OCI-LY7 (cell line): ENCODE measurements at regions of chr10 and their contacts with region 1.

Region 1: GRCh38 chr10:102461187-102462054 is 10.1 kb upstream of the C10orf95 start:
- DNase-seq: peak; percentile 96
- H3K4me3 ChIP-seq: peak overlapping the region; percentile 78
- H3K27ac ChIP-seq: peak overlapping the region; percentile 73
- H3K4me1 ChIP-seq: peaks cover 29% of the 10 kb centered on the region
- CTCF ChIP-seq: no peak

Region 2: DNA sequence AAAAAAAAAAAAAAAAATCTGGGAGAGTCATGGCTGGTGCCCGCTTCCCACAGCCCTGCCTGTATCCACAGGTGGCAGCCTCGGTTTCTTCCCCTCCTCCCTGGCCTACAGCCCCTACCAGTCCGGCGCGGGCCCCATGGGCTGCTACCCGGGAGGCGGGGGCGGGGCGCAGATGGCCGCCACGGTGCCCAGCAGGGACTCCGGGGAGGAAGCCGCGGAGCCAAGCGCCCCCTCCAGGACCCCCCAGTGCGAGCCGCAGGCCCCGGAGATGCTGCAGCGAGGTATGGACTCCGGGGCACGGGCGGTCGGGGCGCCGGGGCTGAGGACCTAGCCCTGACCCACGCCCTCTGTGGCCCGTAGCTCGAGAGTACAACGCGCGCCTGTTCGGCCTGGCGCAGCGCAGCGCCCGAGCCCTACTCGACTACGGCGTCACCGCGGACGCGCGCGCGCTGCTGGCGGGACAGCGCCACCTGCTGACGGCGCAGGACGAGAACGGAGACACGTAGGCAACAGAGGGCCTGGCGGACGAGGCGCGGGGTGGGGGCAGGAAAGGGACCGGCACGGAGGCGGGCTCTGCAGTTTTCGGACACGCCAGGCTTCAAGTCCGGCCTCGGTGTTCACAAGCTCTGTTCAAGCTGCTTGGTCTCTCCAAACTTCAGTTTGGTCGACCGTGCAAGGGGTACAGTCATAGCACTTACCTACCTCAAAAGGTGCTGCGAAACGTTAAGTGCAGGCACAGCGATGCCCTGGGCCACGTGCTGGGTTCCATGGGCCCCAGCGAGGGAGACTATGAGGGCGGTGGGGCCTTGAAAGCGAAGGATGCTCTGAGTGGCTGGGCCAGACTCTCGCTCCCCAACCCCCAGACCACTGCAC is 62.0 kb before region 1 on chr10:
- CTCF ChIA-PET with region 1: no interaction called
- POLR2A ChIA-PET with region 1: interaction called, 3 read pairs
- intact Hi-C with region 1: loop called (anchors 5 kb)
- DNase-seq: peak; percentile 90
- H3K4me3 ChIP-seq: peak overlapping the region; percentile 59
- H3K27ac ChIP-seq: peak overlapping the region; percentile 25
- H3K4me1 ChIP-seq: peaks cover 21% of the 10 kb centered on the region
- CTCF ChIP-seq: peak; percentile 90

Region 3: GRCh38 chr10:102413053-102413705 is 48.2 kb before region 1 on chr10:
- CTCF ChIA-PET with region 1: no interaction called
- POLR2A ChIA-PET with region 1: no interaction called
- intact Hi-C with region 1: no loop called
- DNase-seq: peak; percentile 84
- H3K4me3 ChIP-seq: no peak overlapping the region
- H3K27ac ChIP-seq: no peak overlapping the region
- H3K4me1 ChIP-seq: peaks cover 27% of the 10 kb centered on the region
- CTCF ChIP-seq: no peak

Region 4: GRCh38 chr10:102432162-102432950 is 29.1 kb before region 1 on chr10 and contains the start of gene CUEDC2:
- CTCF ChIA-PET with region 1: no interaction called
- POLR2A ChIA-PET with region 1: interaction called, 6 read pairs
- intact Hi-C with region 1: loop called (anchors 1 kb)
- DNase-seq: peak; percentile 98
- H3K4me3 ChIP-seq: peak within 1 kb of the TSS; percentile 88
- H3K27ac ChIP-seq: peak within 1 kb of the TSS; percentile 41
- H3K4me1 ChIP-seq: peaks cover 19% of the 10 kb centered on the region
- CTCF ChIP-seq: peak; percentile 37; the same call in 1 of the 2 replicates
- total RNA-seq, gene CUEDC2: 48.9 and 61.0 TPM in 2 replicates

Region 5: DNA sequence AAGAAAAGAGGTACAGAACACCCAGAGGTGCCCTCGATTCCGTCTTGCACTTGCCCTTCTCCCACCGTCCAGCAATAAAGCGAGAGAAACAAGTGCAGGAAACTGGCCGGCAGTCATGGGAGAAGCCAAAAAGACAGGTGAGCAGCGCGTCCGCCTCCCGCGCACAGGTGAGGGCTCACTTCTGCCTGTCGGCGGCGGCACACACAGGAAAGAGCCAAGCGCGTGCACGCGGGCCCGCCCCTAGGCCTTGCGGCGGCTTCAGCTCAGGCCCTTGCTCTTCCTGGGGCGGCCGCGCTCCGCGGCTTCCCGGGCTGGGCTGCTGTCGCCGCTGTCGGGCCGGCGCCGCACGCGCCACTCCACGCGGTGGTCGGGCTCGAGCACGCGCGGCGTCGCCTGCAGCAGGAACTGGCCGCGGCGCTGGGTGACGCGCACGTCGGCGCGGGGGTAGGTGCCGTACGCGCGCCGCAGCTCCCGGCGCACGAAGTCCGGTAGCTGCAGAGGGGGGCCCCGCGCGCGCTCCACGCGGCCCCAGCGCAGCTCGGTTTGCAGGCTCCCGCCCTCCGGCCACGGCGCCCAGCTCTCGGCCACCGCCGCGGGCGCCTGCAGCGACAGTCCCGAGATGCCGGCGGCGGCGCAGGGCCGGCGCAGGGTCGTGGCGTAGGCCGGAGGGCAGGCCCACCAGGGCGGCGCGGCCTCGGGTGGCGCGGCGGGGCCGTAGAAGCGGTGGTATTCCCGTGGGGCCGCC is 11.1 kb before region 1 on chr10:
- CTCF ChIA-PET with region 1: interaction called, 4 read pairs
- POLR2A ChIA-PET with region 1: interaction called, 49 read pairs
- intact Hi-C with region 1: loop called (anchors 1 kb)
- DNase-seq: peak; percentile 94
- H3K4me3 ChIP-seq: peak overlapping the region; percentile 96
- H3K27ac ChIP-seq: peak overlapping the region; percentile 83
- H3K4me1 ChIP-seq: peaks cover 33% of the 10 kb centered on the region
- CTCF ChIP-seq: no peak

Region 6: DNA sequence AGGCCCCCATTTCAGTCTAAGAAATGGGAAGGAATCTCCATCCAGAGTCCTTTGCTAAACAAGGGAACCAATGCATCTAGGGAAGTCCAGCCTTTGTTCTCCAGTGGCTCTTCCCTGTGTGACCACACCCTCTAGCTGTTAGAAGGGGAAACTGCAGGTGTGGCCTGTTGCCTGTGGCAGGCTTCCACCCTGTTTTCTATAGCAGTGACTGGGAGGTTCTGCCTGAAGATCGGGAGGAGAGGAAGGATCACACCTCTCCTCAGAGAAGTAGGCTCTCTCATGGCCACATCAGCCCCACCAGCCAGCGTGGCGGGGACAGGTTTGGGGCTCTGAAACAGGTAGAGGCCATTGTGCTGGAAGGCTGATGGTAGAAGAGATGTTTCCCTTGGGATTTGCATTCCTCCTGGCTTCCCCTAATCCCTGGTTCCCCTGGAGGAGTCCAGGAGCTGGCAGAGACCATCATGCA is 135.1 kb after region 1 on chr10:
- CTCF ChIA-PET with region 1: no interaction called
- POLR2A ChIA-PET with region 1: no interaction called
- intact Hi-C with region 1: no loop called
- DNase-seq: peak; percentile 64
- H3K4me3 ChIP-seq: no peak overlapping the region
- H3K27ac ChIP-seq: no peak overlapping the region
- H3K4me1 ChIP-seq: no peaks in the 10 kb centered on the region
- CTCF ChIP-seq: peak; percentile 90

Region 7: GRCh38 chr10:102645741-102646609 is 184.6 kb after region 1 on chr10:
- CTCF ChIA-PET with region 1: no interaction called
- POLR2A ChIA-PET with region 1: no interaction called
- intact Hi-C with region 1: no loop called
- DNase-seq: peak; percentile 82
- H3K4me3 ChIP-seq: peak overlapping the region; percentile 84
- H3K27ac ChIP-seq: peak overlapping the region; percentile 95
- H3K4me1 ChIP-seq: peaks cover 50% of the 10 kb centered on the region
- CTCF ChIP-seq: no peak